ENCODE measurements at regions of chr19 and their contacts with region 1.

Region 1: DNA sequence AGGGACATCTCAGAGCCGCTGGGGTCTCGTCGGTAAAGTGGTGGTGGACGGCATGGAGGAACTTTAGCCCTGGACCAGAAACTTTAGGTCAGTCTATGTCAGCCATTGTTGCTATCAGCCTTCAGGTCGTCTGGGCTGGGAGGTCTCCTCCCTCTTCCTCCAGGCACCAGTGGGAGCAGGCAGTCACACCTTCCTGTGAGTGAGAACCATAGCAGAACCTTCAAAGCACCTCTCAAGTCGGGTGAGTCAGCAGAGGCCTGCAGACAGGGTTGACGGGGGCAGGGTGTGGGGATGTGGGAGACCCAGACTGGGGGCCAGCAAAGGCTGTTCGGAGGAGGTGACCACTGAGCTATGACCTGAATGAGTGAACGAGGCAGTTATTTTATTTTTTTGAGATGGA is 15.4 kb upstream of the SBNO2 start:
- DNase-seq: peak; percentile 86
- H3K4me3 Mint-ChIP-seq: peak overlapping the region; percentile 24
- H3K27ac Mint-ChIP-seq: peak overlapping the region; percentile 66
- H3K4me1 Mint-ChIP-seq: peaks cover 25% of the 10 kb centered on the region
- H3K27me3 Mint-ChIP-seq: no peaks in the 10 kb centered on the region

Region 2: GRCh38 chr19:925526-926322 is 263.7 kb before region 1 on chr19 and contains the start of gene ARID3A:
- CTCF ChIA-PET with region 1: no interaction called
- POLR2A ChIA-PET with region 1: no interaction called
- intact Hi-C with region 1: loop called (anchors 5 kb)
- DNase-seq: peak; percentile 80
- H3K4me3 Mint-ChIP-seq: peak within 1 kb of the TSS; percentile 75
- H3K27ac Mint-ChIP-seq: peak within 1 kb of the TSS; percentile 71
- H3K4me1 Mint-ChIP-seq: peaks cover 12% of the 10 kb centered on the region
- H3K27me3 Mint-ChIP-seq: no peaks in the 10 kb centered on the region
- total RNA-seq, gene ARID3A: 28.5 to 30.6 TPM

Region 3: GRCh38 chr19:1057176-1057855 is 132.1 kb before region 1 on chr19:
- CTCF ChIA-PET with region 1: interaction called, 5 read pairs
- POLR2A ChIA-PET with region 1: no interaction called
- intact Hi-C with region 1: loop called (anchors 5 kb)
- DNase-seq: peak; percentile 62
- H3K4me3 Mint-ChIP-seq: no peak overlapping the region
- H3K27ac Mint-ChIP-seq: peak overlapping the region; percentile 40
- H3K4me1 Mint-ChIP-seq: peaks cover 11% of the 10 kb centered on the region
- H3K27me3 Mint-ChIP-seq: no peaks in the 10 kb centered on the region

Region 4: DNA sequence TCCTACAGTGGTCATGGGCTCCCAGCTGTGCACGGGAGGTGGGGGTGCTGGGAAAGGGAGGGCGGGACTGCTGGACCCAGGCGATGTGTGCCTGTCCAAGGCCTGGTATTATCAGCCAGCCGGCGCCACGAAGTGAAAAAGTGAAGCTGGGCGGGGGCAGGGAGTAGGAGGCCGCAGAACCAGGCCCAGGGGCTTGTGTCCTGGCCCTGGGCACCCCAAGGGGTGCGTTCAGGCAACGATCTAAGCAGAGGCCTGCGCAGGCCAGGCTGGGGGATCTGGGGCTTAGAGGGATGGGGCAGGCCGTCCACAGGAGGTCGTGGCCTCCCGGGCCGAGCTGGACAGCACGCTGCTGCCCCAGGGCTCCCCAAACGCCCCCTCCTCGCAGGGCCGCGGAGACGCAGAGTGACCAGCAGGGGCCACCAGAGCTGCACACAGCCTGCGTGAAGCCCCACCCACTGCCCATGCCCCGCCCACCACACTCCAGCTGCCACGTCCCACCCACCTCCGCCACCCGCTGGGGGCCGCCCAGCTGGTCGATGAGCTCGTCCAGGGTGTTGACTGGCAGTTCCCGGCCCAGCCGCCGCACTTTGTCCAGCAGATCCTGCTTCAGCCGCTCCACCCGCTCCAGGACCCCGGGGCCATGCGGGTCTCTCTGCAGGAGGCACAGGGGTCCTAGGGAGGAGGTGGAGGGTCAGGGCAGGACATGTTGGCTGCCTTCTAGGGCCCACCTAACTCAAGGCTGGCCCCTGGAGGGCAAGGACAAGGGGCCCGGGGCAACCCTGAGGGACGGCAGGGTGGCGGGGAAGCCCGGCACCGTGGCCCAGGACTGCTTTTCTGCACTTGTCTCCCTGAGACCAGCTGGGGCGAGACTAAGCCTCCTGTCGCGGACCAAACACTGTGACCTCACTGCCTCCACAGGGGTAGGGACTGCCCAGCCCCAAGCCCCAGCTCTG is 76.1 kb before region 1 on chr19:
- CTCF ChIA-PET with region 1: interaction called, 20 read pairs
- POLR2A ChIA-PET with region 1: interaction called, 3 read pairs
- intact Hi-C with region 1: no loop called
- DNase-seq: peak; percentile 89
- H3K4me3 Mint-ChIP-seq: no peak overlapping the region
- H3K27ac Mint-ChIP-seq: no peak overlapping the region
- H3K4me1 Mint-ChIP-seq: peaks cover 2% of the 10 kb centered on the region
- H3K27me3 Mint-ChIP-seq: no peaks in the 10 kb centered on the region

Region 5: GRCh38 chr19:1131738-1132551 is 57.5 kb before region 1 on chr19:
- CTCF ChIA-PET with region 1: interaction called, 5 read pairs
- POLR2A ChIA-PET with region 1: interaction called, 5 read pairs
- intact Hi-C with region 1: loop called (anchors 5 kb)
- DNase-seq: peak; percentile 96
- H3K4me3 Mint-ChIP-seq: peak overlapping the region; percentile 94
- H3K27ac Mint-ChIP-seq: peak overlapping the region; percentile 96
- H3K4me1 Mint-ChIP-seq: peaks cover 44% of the 10 kb centered on the region
- H3K27me3 Mint-ChIP-seq: no peaks in the 10 kb centered on the region

Region 6: DNA sequence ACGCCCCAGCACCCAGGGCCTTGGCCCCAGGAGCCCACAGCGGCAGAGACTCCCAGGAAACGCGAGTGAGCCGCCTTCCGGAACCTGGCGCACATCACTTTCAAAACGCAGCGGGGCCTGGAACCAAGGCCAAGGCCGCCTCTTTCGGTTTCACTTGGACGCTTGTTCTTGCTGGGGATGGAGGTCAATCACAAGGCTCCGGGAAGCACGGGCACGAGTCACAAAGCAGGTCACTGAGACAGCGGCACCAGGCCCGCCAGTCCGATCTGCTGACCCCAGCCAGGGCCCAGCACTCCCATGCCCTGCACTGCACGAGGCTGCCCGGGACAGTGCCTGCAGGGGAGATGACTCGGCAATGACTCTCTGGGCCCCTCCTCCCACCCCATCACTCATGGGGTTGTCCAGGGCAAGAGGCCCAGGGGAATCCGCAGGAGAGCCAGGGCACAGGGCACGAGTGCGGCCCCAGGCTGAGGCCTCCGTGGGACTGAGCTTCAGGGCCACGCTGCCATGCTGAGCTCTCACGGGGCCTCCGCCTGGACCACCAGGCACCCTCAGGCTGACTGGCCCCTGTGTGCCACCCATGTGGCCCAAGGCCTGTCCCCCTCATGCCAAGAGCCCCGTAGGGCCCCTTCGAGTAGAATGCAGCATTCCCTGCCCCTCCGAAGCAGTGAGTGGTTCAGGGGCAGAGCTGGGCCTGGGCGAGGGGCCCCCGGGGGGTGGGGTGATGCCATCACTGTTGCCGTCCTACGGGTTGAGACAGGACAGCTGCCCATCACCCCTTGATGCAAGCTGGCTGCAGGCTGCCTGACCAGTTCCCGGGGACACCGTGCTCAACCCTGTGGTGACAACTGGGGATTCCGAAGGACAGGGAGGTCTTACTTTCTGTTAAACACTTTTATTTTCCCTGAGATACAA is 20.3 kb before region 1 on chr19:
- CTCF ChIA-PET with region 1: no interaction called
- POLR2A ChIA-PET with region 1: no interaction called
- intact Hi-C with region 1: no loop called
- DNase-seq: no peak
- H3K4me3 Mint-ChIP-seq: no peak overlapping the region
- H3K27ac Mint-ChIP-seq: no peak overlapping the region
- H3K4me1 Mint-ChIP-seq: peaks cover 23% of the 10 kb centered on the region
- H3K27me3 Mint-ChIP-seq: no peaks in the 10 kb centered on the region

Region 7: DNA sequence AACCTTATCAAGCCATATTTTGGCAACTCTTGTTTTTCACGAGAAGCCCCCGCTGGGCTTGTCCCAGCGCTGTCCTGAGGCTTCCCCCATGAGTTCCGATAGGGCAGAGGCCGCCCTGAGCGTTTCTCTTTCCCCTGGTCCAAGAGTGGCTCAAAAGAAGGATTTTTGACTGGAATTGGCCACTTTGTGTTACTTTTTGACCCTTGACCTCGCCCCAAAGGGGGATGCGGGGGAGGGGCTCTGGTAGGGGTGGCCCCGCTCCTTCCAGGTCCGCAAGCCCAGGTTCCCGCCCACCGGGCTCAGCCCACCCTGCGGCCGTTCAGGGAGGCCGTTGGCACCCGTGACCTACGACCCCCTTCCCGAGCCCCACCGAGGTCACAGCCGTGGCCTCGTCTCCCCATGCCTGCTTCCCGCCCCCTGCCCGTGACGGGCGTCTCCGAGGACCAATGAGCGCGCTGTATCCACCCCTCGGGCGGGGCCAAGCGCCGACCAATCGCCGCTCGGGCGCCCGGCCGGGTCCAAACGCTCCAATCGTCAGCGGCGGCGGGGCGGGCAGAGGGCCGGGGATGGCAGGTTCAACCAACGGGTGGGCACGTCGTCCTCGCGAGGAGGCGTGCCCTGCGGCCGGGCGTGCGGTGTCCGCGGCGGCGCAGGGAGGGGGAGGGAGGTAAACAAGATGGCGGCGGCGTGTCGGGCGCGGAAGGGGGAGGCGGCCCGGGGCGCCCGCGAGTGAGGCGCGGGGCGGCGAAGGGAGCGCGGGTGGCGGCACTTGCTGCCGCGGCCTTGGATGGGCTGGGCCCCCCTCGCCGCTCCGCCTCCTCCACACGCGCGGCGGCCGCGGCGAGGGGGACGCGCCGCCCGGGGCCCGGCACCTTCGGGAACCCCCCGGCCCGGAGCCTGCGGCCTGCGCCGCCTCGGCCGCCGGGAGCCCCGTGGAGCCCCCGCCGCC is 16.0 kb after region 1 on chr19 and contains the start of gene STK11:
- CTCF ChIA-PET with region 1: interaction called, 10 read pairs
- POLR2A ChIA-PET with region 1: interaction called, 3 read pairs
- intact Hi-C with region 1: no loop called
- DNase-seq: peak; percentile 100
- H3K4me3 Mint-ChIP-seq: peak within 1 kb of the TSS; percentile 91
- H3K27ac Mint-ChIP-seq: peak within 1 kb of the TSS; percentile 81
- H3K4me1 Mint-ChIP-seq: peaks cover 24% of the 10 kb centered on the region
- H3K27me3 Mint-ChIP-seq: no peaks in the 10 kb centered on the region
- total RNA-seq, gene STK11: 66.4 to 74.3 TPM

Measured in activated CD4-positive, alpha-beta memory T cell treated with anti-CD3 and anti-CD28 coated beads for 36 hours (primary cell).